ENCODE measurements at regions of chr4 and their contacts with region 1.

Region 1: GRCh38 chr4:13548984-13549546 is 4.8 kb upstream of the NKX3-2 start:
- DNase-seq: peak; percentile 95
- ATAC-seq: peak; percentile 74
- H3K4me3 Mint-ChIP-seq: peak overlapping the region; percentile 69
- H3K27ac Mint-ChIP-seq: peak overlapping the region; percentile 51
- H3K4me1 Mint-ChIP-seq: peaks cover 30% of the 10 kb centered on the region
- H3K27me3 Mint-ChIP-seq: peaks cover 66% of the 10 kb centered on the region

Region 2: GRCh38 chr4:12729384-12729783 is 819.7 kb before region 1 on chr4:
- CTCF ChIA-PET with region 1: interaction called, 5 read pairs
- POLR2A ChIA-PET with region 1: no interaction called
- intact Hi-C with region 1: loop called (anchors 1 kb)
- DNase-seq: no peak
- ATAC-seq: no peak
- H3K4me3 Mint-ChIP-seq: no peak overlapping the region
- H3K27ac Mint-ChIP-seq: no peak overlapping the region
- H3K4me1 Mint-ChIP-seq: peaks cover 1% of the 10 kb centered on the region
- H3K27me3 Mint-ChIP-seq: peaks cover 17% of the 10 kb centered on the region

Region 3: GRCh38 chr4:12852338-12853307 is 696.4 kb before region 1 on chr4:
- CTCF ChIA-PET with region 1: no interaction called
- POLR2A ChIA-PET with region 1: no interaction called
- intact Hi-C with region 1: loop called (anchors 1 kb)
- DNase-seq: no peak
- ATAC-seq: peak; percentile 19
- H3K4me3 Mint-ChIP-seq: no peak overlapping the region
- H3K27ac Mint-ChIP-seq: no peak overlapping the region
- H3K4me1 Mint-ChIP-seq: no peaks in the 10 kb centered on the region
- H3K27me3 Mint-ChIP-seq: peaks cover 4% of the 10 kb centered on the region

Region 4: DNA sequence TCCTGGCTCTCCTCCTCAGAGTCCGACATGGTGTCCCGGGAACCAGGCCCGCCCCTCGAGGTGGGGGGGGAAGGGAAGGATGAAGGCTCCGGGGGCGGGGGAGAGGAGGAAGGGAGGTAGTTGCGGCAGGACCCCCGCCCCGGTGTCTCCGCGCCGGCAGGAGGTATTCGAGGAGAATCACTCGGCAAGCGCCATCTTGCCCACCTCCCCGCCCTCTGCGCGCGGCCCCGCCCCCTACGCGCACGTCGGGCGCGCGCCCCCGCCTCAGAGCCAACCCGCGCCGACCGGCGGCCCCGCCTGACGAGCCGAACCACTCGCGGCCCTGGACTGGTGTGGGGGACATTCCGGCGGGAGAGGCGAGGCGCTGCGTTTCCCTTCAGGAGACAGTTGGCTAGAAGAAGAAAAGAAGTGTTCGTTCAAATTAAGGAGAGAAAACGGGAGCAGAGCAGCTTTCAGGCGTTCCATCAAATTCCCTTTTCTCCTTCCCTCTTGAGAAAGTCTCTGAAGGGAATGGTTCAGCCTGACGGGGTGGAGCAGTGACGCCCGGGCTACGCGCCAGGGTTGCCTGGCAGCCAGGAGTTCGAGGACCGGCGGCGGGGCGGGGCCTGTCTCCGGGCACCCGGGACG is 64.8 kb before region 1 on chr4 and contains the start of gene RAB28:
- CTCF ChIA-PET with region 1: no interaction called
- POLR2A ChIA-PET with region 1: no interaction called
- intact Hi-C with region 1: loop called (anchors 1 to 2 kb)
- DNase-seq: peak; percentile 95
- ATAC-seq: peak; percentile 94
- H3K4me3 Mint-ChIP-seq: peak within 1 kb of the TSS; percentile 93
- H3K27ac Mint-ChIP-seq: peak within 1 kb of the TSS; percentile 99
- H3K4me1 Mint-ChIP-seq: peaks cover 22% of the 10 kb centered on the region
- H3K27me3 Mint-ChIP-seq: peaks cover 8% of the 10 kb centered on the region
- total RNA-seq, gene RAB28: 12.7 to 17.5 TPM

Region 5: GRCh38 chr4:13527981-13528820 is 20.9 kb before region 1 on chr4:
- CTCF ChIA-PET with region 1: interaction called, 4 read pairs
- POLR2A ChIA-PET with region 1: no interaction called
- intact Hi-C with region 1: loop called (anchors 1 to 2 kb)
- DNase-seq: peak; percentile 58
- ATAC-seq: peak; percentile 74
- H3K4me3 Mint-ChIP-seq: peak overlapping the region; percentile 33
- H3K27ac Mint-ChIP-seq: no peak overlapping the region
- H3K4me1 Mint-ChIP-seq: peaks cover 34% of the 10 kb centered on the region
- H3K27me3 Mint-ChIP-seq: peaks cover 80% of the 10 kb centered on the region

Region 6: GRCh38 chr4:13537011-13537831 is 11.8 kb before region 1 on chr4:
- CTCF ChIA-PET with region 1: interaction called, 4 read pairs
- POLR2A ChIA-PET with region 1: no interaction called
- intact Hi-C with region 1: loop called in 1 of 2 experiments (anchors 1 kb)
- DNase-seq: peak; percentile 43
- ATAC-seq: no peak
- H3K4me3 Mint-ChIP-seq: no peak overlapping the region
- H3K27ac Mint-ChIP-seq: no peak overlapping the region
- H3K4me1 Mint-ChIP-seq: peaks cover 36% of the 10 kb centered on the region
- H3K27me3 Mint-ChIP-seq: peaks cover 83% of the 10 kb centered on the region